ENCODE measurements at regions of chr5 and their contacts with region 1.

Region 1: DNA sequence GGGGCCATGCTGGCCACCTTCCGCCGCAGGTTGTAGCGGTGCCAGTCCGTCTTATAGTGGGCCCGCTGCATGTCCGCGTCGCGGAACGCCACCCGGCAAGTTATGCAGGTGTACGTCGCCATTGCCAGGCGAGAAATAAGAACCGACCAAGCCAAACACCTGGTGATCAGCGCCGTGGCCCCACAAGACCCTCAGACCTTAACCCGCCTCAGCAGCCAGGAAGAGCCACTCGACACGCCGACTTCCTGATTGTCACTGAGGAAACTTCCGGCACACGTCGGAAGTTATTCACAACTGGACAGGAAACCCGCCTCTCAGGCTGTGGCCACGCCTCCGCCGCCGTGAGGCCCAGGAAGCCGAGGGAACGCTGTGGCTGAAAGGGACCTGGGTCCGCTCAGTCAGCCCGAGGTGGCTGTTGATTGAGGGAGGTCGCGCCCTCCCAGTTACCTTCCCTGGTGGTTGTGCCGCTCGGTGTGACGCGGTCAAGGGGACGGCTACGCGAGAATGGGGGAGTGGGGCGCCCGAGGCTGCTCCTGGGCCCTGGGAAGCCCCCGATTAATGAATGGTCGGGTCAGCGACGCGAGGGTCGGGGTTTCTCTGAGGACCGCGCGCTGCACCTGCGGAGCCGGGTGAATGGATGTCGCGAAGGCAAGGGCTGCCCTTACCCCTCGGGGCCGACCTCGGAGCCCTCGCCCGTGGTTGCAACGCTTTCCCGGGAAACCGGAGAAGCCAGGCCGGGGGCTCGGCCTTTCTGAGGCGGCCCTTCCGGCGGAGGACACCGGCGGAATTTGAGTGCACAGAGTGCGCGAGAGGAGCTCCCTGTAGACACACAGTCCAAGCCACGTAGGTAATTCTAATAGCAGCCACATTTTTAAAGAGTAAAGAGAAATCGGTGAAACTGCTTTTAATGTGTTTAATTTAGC is at the start of gene ZNF622:
- DNase-seq: peak; percentile 82
- CTCF ChIP-seq: no peak

Region 2: DNA sequence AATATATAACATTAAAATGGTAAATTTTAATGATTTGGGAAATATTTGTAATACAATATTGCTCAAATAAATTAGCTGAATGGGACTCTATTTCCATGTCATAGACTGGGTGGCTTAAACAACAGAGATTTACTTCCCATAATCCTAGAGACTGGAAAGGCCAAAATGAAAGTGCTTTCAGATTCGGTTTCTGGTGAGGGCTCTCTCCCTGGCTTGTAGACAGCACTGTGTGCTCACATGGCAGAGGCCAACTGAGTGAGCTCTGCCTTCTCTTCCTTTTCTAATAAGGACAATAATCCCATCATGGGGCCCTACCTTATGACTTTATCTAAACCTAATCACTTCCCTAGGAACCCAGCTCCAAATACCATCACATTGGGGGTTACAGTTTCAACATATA is 482.4 kb before region 1 on chr5:
- in situ Hi-C with region 1: no loop called
- DNase-seq: no peak
- CTCF ChIP-seq: no peak

Region 3: DNA sequence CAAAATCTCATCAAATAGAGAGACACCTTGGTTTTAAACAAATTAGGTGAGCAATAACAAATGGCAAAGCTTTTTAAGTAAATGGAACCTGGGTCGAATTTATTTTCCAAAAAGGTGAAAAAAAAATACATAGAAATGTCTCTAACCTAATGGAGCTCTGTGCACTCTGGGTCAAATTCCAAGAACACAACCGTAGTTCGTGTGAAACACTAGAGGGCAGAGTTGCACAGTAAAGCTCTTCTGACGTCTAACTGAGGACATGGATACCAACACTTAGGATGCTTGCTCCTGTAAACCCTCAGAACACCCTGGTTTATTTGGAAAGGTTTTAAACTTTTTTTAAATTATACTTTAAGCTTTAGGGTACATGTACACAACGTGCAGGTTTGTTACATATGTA is 305.1 kb before region 1 on chr5:
- in situ Hi-C with region 1: loop called (anchors 25 kb)
- DNase-seq: peak; percentile 27
- CTCF ChIP-seq: peak; percentile 74